ENCODE measurements at regions of chr14 and their contacts with region 1.

Region 1: DNA sequence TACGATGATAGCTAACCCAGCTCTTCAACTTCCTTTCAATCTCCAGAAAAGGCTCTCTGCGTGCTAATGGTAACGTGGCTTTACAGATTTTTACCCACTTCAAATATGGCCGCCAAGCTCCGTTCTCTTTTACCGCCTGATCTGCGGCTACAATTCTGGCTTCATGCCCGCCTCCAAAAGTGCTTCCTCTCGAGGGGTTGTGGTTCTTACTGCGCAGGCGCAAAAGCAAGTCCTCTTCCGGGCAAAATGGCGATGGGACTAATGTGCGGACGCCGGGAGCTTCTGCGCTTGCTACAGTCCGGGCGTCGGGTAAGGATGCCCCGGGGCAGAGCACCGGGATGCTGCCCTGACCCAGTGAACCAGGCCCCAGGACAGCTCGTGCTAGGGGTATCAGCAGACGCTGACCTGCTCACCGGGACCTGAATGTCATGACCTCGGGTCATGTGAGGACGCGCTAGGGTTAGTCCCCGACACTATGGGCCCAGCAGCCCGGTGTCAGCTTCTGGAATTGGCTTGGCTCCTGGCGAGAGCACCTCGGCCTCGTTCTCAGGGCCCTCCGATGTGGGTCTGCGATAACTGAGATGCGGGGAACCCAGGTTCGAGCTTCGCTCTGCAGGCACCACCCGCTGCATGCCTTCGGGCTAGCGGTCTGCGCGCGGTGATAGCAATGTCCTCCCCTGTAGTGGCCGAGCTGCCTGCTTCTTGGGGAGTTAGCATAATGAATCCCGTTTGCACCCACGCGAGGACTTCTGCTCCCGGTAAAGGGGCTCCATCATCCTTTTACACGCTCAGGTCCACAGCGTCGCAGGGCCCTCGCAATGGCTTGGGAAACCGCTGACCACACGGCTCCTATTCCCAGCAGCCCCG is at the start of gene OXA1L:
- DNase-seq: peak; percentile 79
- ATAC-seq: peak; percentile 89
- H3K4me3 Mint-ChIP-seq: peak within 1 kb of the TSS; percentile 93
- H3K27ac Mint-ChIP-seq: peak within 1 kb of the TSS; percentile 97
- H3K4me1 Mint-ChIP-seq: peaks cover 35% of the 10 kb centered on the region
- H3K27me3 Mint-ChIP-seq: no peaks in the 10 kb centered on the region
- CTCF ChIP-seq: no peak
- total RNA-seq, gene OXA1L: 174 and 190 TPM in 2 replicates

Region 2: DNA sequence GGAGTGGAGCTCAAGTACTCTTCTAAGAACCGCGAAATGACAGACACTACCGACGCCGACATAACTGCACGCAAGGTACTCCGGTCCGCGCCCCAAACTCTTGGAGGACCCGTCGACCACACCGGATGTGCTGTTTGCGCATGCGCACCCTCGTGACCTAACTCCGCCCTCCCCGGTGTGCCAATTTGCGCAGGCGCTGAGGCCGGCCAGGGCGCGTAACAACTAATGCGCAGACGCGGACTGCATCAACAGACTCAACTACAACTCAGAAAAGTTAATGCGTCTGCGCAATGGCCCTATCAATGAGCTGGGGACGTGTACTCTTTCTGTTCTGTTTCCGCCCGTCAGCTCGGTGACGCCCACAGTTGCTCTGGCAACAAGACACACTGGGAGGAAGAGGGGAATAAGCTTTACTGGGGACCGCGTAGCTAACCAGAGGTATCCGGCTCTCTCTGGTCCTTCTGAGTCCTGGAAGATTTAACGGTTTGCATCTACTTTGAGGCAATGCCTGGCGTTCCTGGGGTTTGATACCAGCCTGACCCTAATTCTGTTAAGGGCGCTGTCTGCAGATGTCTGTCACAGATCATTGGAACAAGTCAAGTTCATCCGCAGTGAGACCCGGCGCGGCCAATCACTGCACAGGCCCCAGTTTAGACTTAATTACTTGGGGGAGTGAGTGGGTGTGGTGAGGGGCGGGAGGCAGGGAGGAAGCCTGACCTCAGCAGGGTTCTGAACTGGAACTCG is 177.4 kb before region 1 on chr14 and contains the start of gene DAD1:
- CTCF ChIA-PET with region 1: no interaction called
- POLR2A ChIA-PET with region 1: interaction called, 19 read pairs
- intact Hi-C with region 1: loop called (anchors 1 kb)
- DNase-seq: peak; percentile 99
- ATAC-seq: peak; percentile 88
- H3K4me3 Mint-ChIP-seq: peak within 1 kb of the TSS; percentile 99
- H3K27ac Mint-ChIP-seq: peak within 1 kb of the TSS; percentile 100
- H3K4me1 Mint-ChIP-seq: peaks cover 57% of the 10 kb centered on the region
- H3K27me3 Mint-ChIP-seq: peaks cover 2% of the 10 kb centered on the region
- CTCF ChIP-seq: no peak
- total RNA-seq, gene DAD1: 123 and 139 TPM in 2 replicates

Region 3: GRCh38 chr14:22781586-22781991 is 14.9 kb after region 1 on chr14:
- CTCF ChIA-PET with region 1: interaction called, 3 read pairs
- POLR2A ChIA-PET with region 1: interaction called, 10 read pairs
- intact Hi-C with region 1: no loop called
- DNase-seq: no peak
- ATAC-seq: no peak
- H3K4me3 Mint-ChIP-seq: no peak overlapping the region
- H3K27ac Mint-ChIP-seq: peak overlapping the region; percentile 76
- H3K4me1 Mint-ChIP-seq: peaks cover 15% of the 10 kb centered on the region
- H3K27me3 Mint-ChIP-seq: no peaks in the 10 kb centered on the region
- CTCF ChIP-seq: no peak

Region 4: DNA sequence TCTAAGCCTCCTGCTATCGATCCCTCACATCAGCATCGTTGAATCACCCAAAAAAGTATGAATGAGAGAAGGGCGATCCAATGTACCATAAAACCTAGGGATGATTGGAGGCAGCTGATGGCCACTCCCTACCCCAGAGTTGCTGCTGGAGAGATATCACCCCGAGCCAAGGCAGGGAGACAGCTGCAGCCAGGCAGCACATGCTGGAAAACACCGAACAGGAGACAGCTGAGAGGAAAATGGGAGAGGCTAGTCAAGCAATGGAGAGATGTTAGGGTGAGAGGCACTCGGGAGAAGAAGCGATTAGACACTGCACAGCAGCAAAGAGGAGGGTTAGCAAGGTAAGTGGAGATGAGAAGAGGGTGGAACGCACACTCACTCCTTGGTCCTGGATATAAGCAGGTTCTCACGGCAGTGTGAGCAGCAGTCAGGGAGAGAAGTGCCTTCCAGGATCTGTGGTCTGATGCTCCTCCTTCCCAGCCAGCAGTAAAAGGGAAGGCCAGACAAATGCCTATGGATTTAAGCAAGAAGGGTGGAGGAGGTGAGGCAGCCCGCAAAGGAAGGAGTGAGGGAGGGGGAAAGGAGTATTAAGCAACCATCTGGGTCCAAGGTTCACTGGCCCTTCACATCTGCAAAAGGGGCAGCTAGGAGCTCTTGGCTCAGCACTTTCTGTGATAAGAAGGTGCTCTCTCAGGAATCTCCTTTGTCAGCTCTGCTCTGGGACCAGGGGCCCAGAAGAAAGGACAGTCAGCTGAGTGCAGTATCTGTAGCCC is 48.4 kb after region 1 on chr14 and contains the start of gene SLC7A7:
- CTCF ChIA-PET with region 1: interaction called, 6 read pairs
- POLR2A ChIA-PET with region 1: interaction called, 25 read pairs
- intact Hi-C with region 1: no loop called
- DNase-seq: no peak
- ATAC-seq: no peak
- H3K4me3 Mint-ChIP-seq: peak within 1 kb of the TSS; percentile 52
- H3K27ac Mint-ChIP-seq: peak within 1 kb of the TSS; percentile 91
- H3K4me1 Mint-ChIP-seq: peaks cover 82% of the 10 kb centered on the region
- H3K27me3 Mint-ChIP-seq: no peaks in the 10 kb centered on the region
- CTCF ChIP-seq: no peak
- total RNA-seq, gene SLC7A7: 30.8 and 33.7 TPM in 2 replicates

Region 5: DNA sequence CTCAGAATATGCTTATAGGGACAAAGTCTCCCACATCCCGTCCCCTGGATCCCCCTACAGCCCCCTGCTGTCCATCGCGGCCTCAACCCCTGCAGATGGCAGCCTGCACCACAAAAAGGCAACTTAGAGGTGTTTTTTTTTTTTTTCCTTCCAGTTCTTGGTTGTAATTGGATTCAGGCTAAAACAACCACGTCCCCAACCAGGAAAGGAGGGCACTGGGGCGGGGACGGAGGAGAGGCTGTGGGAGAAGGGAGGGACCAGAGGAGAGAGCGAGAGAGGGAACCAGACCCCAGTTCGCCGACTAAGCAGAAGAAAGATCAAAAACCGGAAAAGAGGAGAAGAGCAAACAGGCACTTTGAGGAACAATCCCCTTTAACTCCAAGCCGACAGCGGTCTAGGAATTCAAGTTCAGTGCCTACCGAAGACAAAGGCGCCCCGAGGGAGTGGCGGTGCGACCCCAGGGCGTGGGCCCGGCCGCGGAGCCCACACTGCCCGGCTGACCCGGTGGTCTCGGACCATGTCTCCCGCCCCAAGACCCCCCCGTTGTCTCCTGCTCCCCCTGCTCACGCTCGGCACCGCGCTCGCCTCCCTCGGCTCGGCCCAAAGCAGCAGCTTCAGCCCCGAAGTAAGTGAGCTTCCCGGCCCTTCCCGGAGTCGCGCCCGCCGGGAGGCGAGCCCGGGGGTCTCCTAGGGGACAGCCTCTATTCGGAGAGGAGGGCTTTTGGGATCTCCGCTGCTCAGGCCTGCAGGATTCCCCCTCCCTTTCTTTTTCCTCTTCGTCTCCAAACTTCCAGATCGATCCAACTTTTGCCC is 69.8 kb after region 1 on chr14 and contains the start of gene MMP14:
- CTCF ChIA-PET with region 1: interaction called, 3 read pairs
- POLR2A ChIA-PET with region 1: interaction called, 33 read pairs
- intact Hi-C with region 1: no loop called
- DNase-seq: no peak
- ATAC-seq: peak; percentile 38
- H3K4me3 Mint-ChIP-seq: peak within 1 kb of the TSS; percentile 88
- H3K27ac Mint-ChIP-seq: peak within 1 kb of the TSS; percentile 76
- H3K4me1 Mint-ChIP-seq: peaks cover 17% of the 10 kb centered on the region
- H3K27me3 Mint-ChIP-seq: peaks cover 2% of the 10 kb centered on the region
- CTCF ChIP-seq: no peak
- total RNA-seq, gene MMP14: 3.4 and 4.1 TPM in 2 replicates

Region 6: DNA sequence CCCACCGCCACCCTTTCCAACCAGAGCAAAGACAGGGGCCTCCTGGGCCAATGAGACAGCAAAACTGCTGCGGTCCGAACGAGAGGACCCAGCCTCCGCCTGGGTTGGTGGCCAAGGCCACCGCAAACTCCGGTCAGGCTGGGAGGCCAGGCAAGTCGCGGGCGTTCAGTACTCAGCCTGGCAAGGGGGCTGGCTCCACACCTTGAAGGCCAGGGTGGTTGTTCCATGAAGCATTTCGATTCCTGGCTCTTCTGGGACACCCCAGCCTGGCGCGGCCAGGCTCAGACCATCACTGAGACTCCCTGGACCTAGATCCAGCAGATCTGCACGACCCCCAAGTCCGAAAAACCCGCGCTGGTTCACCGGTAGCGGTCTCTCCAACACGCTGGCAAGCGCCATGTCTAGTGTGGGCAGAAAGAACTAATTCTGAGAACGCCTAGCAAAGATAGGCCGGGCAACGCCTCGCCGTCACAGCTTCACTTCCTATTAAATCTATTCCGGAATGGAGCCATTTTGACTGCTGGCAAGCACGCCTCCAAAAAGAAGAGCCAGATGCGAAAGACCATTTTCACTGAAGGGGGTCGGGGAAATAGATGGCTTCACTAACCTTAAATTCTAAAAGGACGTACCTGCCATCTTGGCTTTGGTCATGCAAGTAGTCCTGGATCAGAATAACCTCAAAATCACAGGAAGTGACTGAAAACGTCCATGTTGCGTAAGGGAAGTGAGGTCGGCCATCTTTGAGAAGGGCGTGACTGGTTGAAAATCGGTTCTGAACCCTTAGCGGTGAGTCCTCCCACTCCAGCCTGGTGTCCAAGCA is 268.0 kb after region 1 on chr14 and contains the start of gene PSMB5:
- CTCF ChIA-PET with region 1: no interaction called
- POLR2A ChIA-PET with region 1: no interaction called
- intact Hi-C with region 1: loop called (anchors 1 kb)
- DNase-seq: peak; percentile 67
- ATAC-seq: peak; percentile 93
- H3K4me3 Mint-ChIP-seq: peak within 1 kb of the TSS; percentile 84
- H3K27ac Mint-ChIP-seq: peak within 1 kb of the TSS; percentile 96
- H3K4me1 Mint-ChIP-seq: peaks cover 29% of the 10 kb centered on the region
- H3K27me3 Mint-ChIP-seq: no peaks in the 10 kb centered on the region
- CTCF ChIP-seq: no peak
- total RNA-seq, gene PSMB5: 53.3 and 67.5 TPM in 2 replicates